ENCODE measurements at regions of chr22 and their contacts with region 1.

Region 1: GRCh38 chr22:36873680-36874537 is 13.1 kb downstream of the NCF4 start:
- DNase-seq: no peak
- H3K4me3 ChIP-seq: no peak overlapping the region
- H3K27ac ChIP-seq: no peak overlapping the region
- H3K4me1 ChIP-seq: no peaks in the 10 kb centered on the region
- H3K27me3 ChIP-seq: no peaks in the 10 kb centered on the region
- CTCF ChIP-seq: peak in 2 of 3 experiments; percentile 9 to 11

Region 2: DNA sequence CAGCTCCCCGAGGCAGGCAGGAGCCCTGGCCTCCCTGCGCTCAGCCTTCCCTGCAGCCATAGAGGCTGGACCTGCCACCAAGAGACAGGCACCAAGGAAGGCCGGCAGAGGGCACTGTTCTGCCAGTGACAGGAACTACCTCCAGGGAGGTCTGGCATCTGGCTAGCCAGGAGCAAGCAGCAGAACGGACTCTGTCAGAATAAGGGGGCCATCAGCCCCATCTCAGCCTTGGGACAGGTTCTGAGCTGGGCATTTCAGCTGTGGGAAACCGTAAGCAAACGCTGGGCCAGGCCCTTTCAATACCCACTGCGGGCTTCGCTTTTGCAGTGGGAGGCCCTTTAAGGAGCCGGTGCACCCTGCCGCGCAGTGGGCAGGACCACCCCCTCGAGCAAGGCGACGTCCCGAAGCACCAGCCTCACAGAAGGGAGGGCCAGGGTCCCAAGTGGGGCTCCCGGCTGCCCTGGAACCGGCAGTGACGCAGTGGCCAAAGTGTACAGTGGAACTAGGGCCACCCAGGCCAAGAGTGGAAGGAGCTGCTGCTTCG is 116.2 kb before region 1 on chr22:
- intact Hi-C with region 1: no loop called
- DNase-seq: peak in 1 of 2 donors; percentile 81
- H3K4me3 ChIP-seq: no peak overlapping the region
- H3K27ac ChIP-seq: no peak overlapping the region
- H3K4me1 ChIP-seq: no peaks in the 10 kb centered on the region
- H3K27me3 ChIP-seq: no peaks in the 10 kb centered on the region
- CTCF ChIP-seq: peak; percentile 29 to 63 (median 60)

Region 3: GRCh38 chr22:36966851-36967540 is 93.1 kb after region 1 on chr22:
- intact Hi-C with region 1: loop called (anchors 10 kb)
- DNase-seq: no peak
- H3K4me3 ChIP-seq: no peak overlapping the region
- H3K27ac ChIP-seq: no peak overlapping the region
- H3K4me1 ChIP-seq: no peaks in the 10 kb centered on the region
- H3K27me3 ChIP-seq: no peaks in the 10 kb centered on the region
- CTCF ChIP-seq: no peak

Measured in ascending aorta (tissue), 2 donors.